ENCODE measurements at regions of chr6 and their contacts with region 1.

Region 1: GRCh38 chr6:138987640-138988468 is at the start of gene REPS1:
- DNase-seq: peak; percentile 92
- ATAC-seq: peak; percentile 94
- H3K4me3 Mint-ChIP-seq: peak within 1 kb of the TSS; percentile 84
- H3K27ac Mint-ChIP-seq: peak within 1 kb of the TSS; percentile 92
- H3K4me1 Mint-ChIP-seq: peaks cover 20% of the 10 kb centered on the region
- H3K27me3 Mint-ChIP-seq: peaks cover 3% of the 10 kb centered on the region
- total RNA-seq, gene REPS1: 48.2 to 55.2 TPM

Region 2: GRCh38 chr6:138817822-138818308 is 170.0 kb before region 1 on chr6:
- CTCF ChIA-PET with region 1: interaction called, 51 read pairs
- DNase-seq: peak; percentile 44
- ATAC-seq: peak; percentile 34
- H3K4me3 Mint-ChIP-seq: no peak overlapping the region
- H3K27ac Mint-ChIP-seq: peak overlapping the region; percentile 50
- H3K4me1 Mint-ChIP-seq: peaks cover 25% of the 10 kb centered on the region
- H3K27me3 Mint-ChIP-seq: no peaks in the 10 kb centered on the region

Region 3: GRCh38 chr6:139028658-139029469 is 41.0 kb after region 1 on chr6 and contains the start of gene ABRACL:
- CTCF ChIA-PET with region 1: interaction called, 20 read pairs
- DNase-seq: peak; percentile 88
- ATAC-seq: peak; percentile 83
- H3K4me3 Mint-ChIP-seq: no peak within 1 kb of the TSS
- H3K27ac Mint-ChIP-seq: peak within 1 kb of the TSS; percentile 83
- H3K4me1 Mint-ChIP-seq: peaks cover 24% of the 10 kb centered on the region
- H3K27me3 Mint-ChIP-seq: no peaks in the 10 kb centered on the region
- total RNA-seq, gene ABRACL: 98.2 to 124 TPM

Measured in activated CD8-positive, alpha-beta memory T cell treated with anti-CD3 and anti-CD28 coated beads, Interleukin-2, amount 10 ng/mL, durations not matched to agents 7 days and 5 days (primary cell).